ENCODE measurements at regions of chr14 and their contacts with region 1.

Region 1: DNA sequence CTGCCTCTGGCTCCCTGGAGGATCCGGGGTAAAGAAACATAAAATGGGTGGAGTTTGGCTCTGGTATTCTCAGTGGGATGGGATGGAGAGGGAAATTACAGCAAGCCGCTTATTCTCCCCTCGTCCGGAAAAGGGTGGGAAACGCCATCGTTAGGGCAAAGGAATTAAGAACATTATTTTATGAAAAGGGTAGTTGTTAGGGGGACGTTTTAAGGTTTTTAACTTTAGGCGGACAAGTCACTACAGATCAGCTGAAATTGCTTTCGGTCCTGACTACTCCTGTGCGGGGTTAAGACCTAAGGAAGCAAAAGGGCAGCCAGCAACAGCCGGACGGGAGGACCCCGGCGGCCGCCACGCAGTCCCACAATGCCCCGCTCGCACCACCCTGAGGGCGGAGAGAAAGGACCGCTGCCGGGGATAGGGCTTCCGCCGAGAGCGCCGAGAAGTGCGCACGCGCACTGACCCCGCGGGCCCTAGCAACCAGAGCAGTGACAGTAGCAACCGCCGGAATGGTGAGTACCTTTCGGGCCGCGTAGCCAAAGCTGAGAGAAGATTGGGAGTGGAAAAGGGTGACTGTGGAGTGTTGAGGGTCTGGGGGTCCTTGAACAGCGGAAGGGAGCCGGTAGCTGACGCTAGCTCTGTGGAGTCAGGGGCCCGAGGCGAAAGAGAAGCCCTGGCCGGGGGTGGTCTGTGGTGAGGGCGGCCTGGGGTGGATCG is at the start of gene DNAL1:
- DNase-seq: peak; percentile 91 to 96 (median 93)
- H3K4me3 ChIP-seq: peak within 1 kb of the TSS; percentile 41
- H3K27ac ChIP-seq: peak within 1 kb of the TSS; percentile 1 to 83
- H3K4me1 ChIP-seq: peaks cover 3% of the 10 kb centered on the region
- H3K27me3 ChIP-seq: no peaks in the 10 kb centered on the region
- CTCF ChIP-seq: no peak
- EP300 ChIP-seq: no peak
- POLR2A ChIP-seq: peak; percentile 61
- total RNA-seq, gene DNAL1: 11.2 to 19.9 (median 16.2) TPM

Region 2: GRCh38 chr14:73553845-73554244 is 90.8 kb before region 1 on chr14:
- intact Hi-C with region 1: no loop called
- DNase-seq: no peak
- H3K4me3 ChIP-seq: no peak overlapping the region
- H3K27ac ChIP-seq: no peak overlapping the region
- H3K4me1 ChIP-seq: no peaks in the 10 kb centered on the region
- H3K27me3 ChIP-seq: no peaks in the 10 kb centered on the region
- CTCF ChIP-seq: no peak
- EP300 ChIP-seq: no peak
- POLR2A ChIP-seq: no peak

Region 3: DNA sequence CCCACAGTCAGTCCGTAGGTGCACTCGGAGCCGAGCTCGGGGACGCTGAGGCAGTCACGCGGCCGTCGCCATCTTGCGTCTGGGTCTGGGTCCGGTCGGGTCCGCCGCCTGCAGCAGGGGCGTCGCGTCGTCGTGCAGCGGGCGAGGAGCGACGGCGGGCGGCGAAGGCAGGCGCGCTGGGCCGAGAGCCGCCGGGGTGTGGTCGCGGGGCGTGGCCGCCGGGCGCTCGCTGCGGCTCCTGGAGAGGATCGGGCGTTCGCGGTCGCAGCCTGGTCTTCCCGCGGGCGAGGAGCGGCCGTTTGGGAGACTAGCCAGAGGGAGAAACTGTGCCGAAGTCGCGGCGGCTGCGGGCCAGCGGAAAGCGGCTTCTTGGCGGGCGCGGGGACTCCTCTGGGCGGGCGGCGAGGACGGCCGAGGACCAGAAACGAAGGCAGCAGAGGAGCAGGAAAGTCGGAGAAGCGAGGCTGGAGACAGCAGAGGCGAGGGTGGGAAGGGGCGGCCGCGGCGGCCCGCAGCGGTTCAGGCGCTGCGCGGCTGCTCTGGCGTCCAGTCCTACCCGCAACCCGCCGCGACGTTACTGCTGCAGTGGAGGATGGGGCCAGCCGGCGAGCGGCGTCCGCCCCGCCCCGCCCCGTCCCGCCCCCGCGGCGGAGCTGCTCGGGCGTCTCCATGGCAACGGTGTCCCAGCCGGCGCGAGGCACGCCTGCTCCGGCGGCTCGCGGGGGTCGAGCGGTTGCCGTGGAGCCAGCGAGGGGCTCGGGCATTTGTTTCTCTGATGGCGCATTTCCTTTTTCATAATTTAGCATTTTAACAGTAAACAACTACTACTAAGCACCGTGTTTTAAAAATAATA is 69.3 kb after region 1 on chr14 and contains the start of gene PNMA1:
- intact Hi-C with region 1: loop called in 1 of 4 experiments (anchors 10 kb)
- DNase-seq: peak; percentile 89 to 93 (median 92)
- H3K4me3 ChIP-seq: peak within 1 kb of the TSS; percentile 66
- H3K27ac ChIP-seq: peak within 1 kb of the TSS; percentile 81 to 94
- H3K4me1 ChIP-seq: peaks cover 11% of the 10 kb centered on the region
- H3K27me3 ChIP-seq: no peaks in the 10 kb centered on the region
- CTCF ChIP-seq: no peak
- EP300 ChIP-seq: no peak
- POLR2A ChIP-seq: peak; percentile 85
- total RNA-seq, gene PNMA1: 22.3 to 114 (median 87.3) TPM